ENCODE measurements at regions of chr5 and their contacts with region 1.

Region 1: GRCh38 chr5:31614151-31615020 is 24.5 kb upstream of the PDZD2 start:
- DNase-seq: no peak
- ATAC-seq: no peak
- H3K4me3 ChIP-seq: no peak overlapping the region
- H3K27ac ChIP-seq: no peak overlapping the region
- H3K4me1 ChIP-seq: no peaks in the 10 kb centered on the region; the same call in 1 of the 2 replicates
- H3K27me3 ChIP-seq: no peaks in the 10 kb centered on the region; the same call in none of the 2 replicates
- CTCF ChIP-seq: no peak

Region 2: GRCh38 chr5:31880449-31880848 is 266.1 kb after region 1 on chr5:
- CTCF ChIA-PET with region 1: no interaction called
- POLR2A ChIA-PET with region 1: interaction called, 14 read pairs
- in situ Hi-C with region 1: no loop called
- intact Hi-C with region 1: no loop called
- DNase-seq: no peak
- ATAC-seq: no peak
- H3K4me3 ChIP-seq: no peak overlapping the region
- H3K27ac ChIP-seq: no peak overlapping the region
- H3K4me1 ChIP-seq: no peaks in the 10 kb centered on the region
- H3K27me3 ChIP-seq: peaks cover 1% of the 10 kb centered on the region; the same call in 1 of the 2 replicates
- CTCF ChIP-seq: no peak

Measured in Panc1 (cell line).